MCF 10A (cell line): ENCODE measurements at regions of chr6 and their contacts with region 1.

Region 1: GRCh38 chr6:57190140-57190539 is 18.0 kb downstream of the BAG2 start:
- DNase-seq: peak; percentile 17
- H3K4me3 Mint-ChIP-seq: no peak overlapping the region
- H3K27ac Mint-ChIP-seq: no peak overlapping the region
- H3K4me1 Mint-ChIP-seq: no peaks in the 10 kb centered on the region
- H3K27me3 Mint-ChIP-seq: no peaks in the 10 kb centered on the region
- CTCF ChIP-seq: no peak

Region 2: GRCh38 chr6:57324538-57324937 is 134.4 kb after region 1 on chr6:
- CTCF ChIA-PET with region 1: interaction called, 5 read pairs
- POLR2A ChIA-PET with region 1: no interaction called
- intact Hi-C with region 1: loop called (anchors 2 kb)
- DNase-seq: no peak
- H3K4me3 Mint-ChIP-seq: no peak overlapping the region
- H3K27ac Mint-ChIP-seq: no peak overlapping the region
- H3K4me1 Mint-ChIP-seq: peaks cover 13% of the 10 kb centered on the region
- H3K27me3 Mint-ChIP-seq: no peaks in the 10 kb centered on the region
- CTCF ChIP-seq: peak; percentile 33